ENCODE measurements at regions of chr1 and their contacts with region 1.

Region 1: GRCh38 chr1:100249537-100250257 is at the start of gene DBT:
- DNase-seq: peak; percentile 94
- H3K4me3 Mint-ChIP-seq: peak within 1 kb of the TSS; percentile 19
- H3K27ac Mint-ChIP-seq: no peak within 1 kb of the TSS
- H3K4me1 Mint-ChIP-seq: peaks cover 15% of the 10 kb centered on the region
- H3K27me3 Mint-ChIP-seq: no peaks in the 10 kb centered on the region
- total RNA-seq, gene DBT: 12.1 to 12.9 TPM

Region 2: GRCh38 chr1:100132566-100133477 is 116.9 kb before region 1 on chr1 and contains the starts of genes SASS6 and TRMT13:
- CTCF ChIA-PET with region 1: no interaction called
- POLR2A ChIA-PET with region 1: interaction called, 12 read pairs
- DNase-seq: peak; percentile 97
- H3K4me3 Mint-ChIP-seq: peak within 1 kb of the TSS; percentile 96
- H3K27ac Mint-ChIP-seq: peak within 1 kb of the TSS; percentile 90
- H3K4me1 Mint-ChIP-seq: peaks cover 50% of the 10 kb centered on the region
- H3K27me3 Mint-ChIP-seq: no peaks in the 10 kb centered on the region
- total RNA-seq, gene SASS6: 13.2 to 13.3 TPM
- total RNA-seq, gene TRMT13: 13.9 to 15.4 TPM

Region 3: GRCh38 chr1:100152271-100152670 is 97.4 kb before region 1 on chr1:
- CTCF ChIA-PET with region 1: no interaction called
- POLR2A ChIA-PET with region 1: no interaction called
- DNase-seq: no peak
- H3K4me3 Mint-ChIP-seq: no peak overlapping the region
- H3K27ac Mint-ChIP-seq: no peak overlapping the region
- H3K4me1 Mint-ChIP-seq: peaks cover 5% of the 10 kb centered on the region
- H3K27me3 Mint-ChIP-seq: no peaks in the 10 kb centered on the region

Measured in activated CD4-positive, alpha-beta memory T cell treated with anti-CD3 and anti-CD28 coated beads, Interleukin-2, amount 10 ng/mL, durations not matched to agents 7 days and 5 days (primary cell).